Mammary epithelial cell (primary cell): ENCODE measurements at regions of chr1 and their contacts with region 1.

Region 1: DNA sequence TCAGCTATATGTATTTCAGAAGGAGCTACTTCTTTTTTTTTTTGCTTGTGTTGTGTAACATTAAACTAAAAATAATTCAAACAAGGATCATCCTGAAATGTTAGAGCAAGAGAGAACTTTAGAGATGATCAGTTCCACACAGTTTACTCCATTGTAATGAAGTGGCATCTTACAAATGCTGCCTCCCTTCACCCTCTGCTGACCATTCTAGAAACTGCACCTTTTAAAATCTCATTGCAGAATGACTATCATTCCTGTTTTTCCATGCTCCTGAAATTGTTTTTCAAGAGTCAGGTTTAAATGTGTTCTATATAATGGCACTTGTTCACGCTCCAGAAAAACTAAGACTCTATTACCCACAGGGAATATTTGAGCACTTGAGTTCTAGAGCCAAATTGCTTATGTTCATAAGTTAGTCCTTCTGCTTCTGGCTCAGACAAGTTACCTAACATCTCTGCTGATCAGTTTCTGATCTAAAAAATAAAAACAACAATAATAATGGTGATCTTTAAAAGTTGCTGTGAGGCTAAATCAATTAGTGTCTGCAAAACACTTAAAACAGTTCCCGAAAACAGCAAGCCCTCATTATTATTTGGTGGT is 21.5 kb upstream of the SLC44A5 start:
- DNase-seq: peak; percentile 11
- H3K4me3 ChIP-seq: no peak overlapping the region
- H3K27ac ChIP-seq: no peak overlapping the region
- H3K4me1 ChIP-seq: no peaks in the 10 kb centered on the region
- H3K27me3 ChIP-seq: peaks cover 4% of the 10 kb centered on the region
- CTCF ChIP-seq: peak; percentile 79 to 83

Region 2: GRCh38 chr1:75233302-75233929 is 399.0 kb before region 1 on chr1:
- CTCF ChIA-PET with region 1: interaction called, 7 read pairs
- dilution Hi-C with region 1: no loop called
- in situ Hi-C with region 1: no loop called
- intact Hi-C with region 1: loop called (anchors 1 kb)
- DNase-seq: peak; percentile 37
- H3K4me3 ChIP-seq: no peak overlapping the region
- H3K27ac ChIP-seq: no peak overlapping the region
- H3K4me1 ChIP-seq: no peaks in the 10 kb centered on the region
- H3K27me3 ChIP-seq: no peaks in the 10 kb centered on the region
- CTCF ChIP-seq: peak; percentile 68 to 75

Region 3: DNA sequence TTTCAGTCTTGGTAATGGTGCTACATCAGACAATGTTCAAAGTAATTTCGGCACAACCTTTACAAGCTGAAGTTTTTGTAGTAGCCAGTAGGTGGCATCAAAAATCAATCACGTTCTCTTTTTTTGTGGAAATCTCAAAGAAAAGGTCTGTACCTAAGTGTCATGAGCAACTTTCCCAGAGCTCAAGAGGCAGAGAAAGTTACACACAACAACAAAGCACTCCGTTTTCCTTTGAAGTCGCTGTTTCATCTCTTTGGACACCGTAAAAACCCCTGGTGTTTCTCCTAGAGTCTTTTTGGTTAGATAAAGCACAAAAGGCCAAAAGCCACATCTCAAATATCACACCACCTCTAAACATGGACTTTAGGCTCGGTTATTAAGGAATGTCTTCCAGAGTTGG is 366.7 kb before region 1 on chr1:
- CTCF ChIA-PET with region 1: no interaction called
- dilution Hi-C with region 1: no loop called
- in situ Hi-C with region 1: loop called (anchors 10 to 25 kb)
- intact Hi-C with region 1: loop called (anchors 1 kb)
- DNase-seq: peak; percentile 35
- H3K4me3 ChIP-seq: no peak overlapping the region
- H3K27ac ChIP-seq: no peak overlapping the region
- H3K4me1 ChIP-seq: no peaks in the 10 kb centered on the region
- H3K27me3 ChIP-seq: no peaks in the 10 kb centered on the region
- CTCF ChIP-seq: peak; percentile 63 to 65

Region 4: DNA sequence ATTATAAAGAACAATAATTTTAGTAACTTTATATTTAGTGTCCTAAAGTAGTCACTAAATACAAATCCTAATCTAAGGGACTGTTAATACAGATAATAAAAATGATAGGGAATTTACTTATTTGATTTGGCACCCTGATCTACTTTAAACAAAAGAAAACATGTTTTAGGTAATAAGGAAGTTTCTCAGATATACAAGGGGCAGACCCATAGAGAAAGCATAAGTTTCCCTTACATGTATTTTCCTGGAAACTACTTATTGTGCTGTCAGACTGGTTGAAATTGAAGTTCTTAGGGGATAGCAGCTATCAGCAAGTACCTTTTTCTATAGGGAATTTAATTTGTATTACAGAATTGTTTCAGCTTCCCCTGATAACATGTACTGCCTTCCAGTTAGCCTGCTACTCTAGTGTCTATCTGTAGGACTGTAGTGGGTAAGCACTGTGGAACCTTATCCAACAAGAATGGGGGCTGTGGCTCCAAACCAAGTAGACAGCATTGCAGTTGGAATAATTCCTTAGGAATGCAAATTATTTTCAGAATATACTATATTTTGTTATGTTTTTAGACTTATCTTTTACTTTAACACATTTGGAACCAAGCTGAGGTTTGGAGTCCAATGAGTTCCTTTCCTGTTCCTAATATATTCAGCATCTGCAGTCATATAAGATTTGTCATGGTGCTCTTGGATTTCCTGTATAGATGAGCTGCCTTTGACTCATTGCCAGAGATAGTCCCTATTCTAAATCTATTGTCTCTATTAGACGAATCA is 178.9 kb after region 1 on chr1:
- CTCF ChIA-PET with region 1: no interaction called
- dilution Hi-C with region 1: no loop called
- in situ Hi-C with region 1: no loop called
- intact Hi-C with region 1: no loop called
- DNase-seq: no peak
- H3K4me3 ChIP-seq: no peak overlapping the region
- H3K27ac ChIP-seq: no peak overlapping the region
- H3K4me1 ChIP-seq: no peaks in the 10 kb centered on the region
- H3K27me3 ChIP-seq: no peaks in the 10 kb centered on the region
- CTCF ChIP-seq: no peak